Panc1 (cell line): ENCODE measurements at regions of chr5 and their contacts with region 1.

Region 1: DNA sequence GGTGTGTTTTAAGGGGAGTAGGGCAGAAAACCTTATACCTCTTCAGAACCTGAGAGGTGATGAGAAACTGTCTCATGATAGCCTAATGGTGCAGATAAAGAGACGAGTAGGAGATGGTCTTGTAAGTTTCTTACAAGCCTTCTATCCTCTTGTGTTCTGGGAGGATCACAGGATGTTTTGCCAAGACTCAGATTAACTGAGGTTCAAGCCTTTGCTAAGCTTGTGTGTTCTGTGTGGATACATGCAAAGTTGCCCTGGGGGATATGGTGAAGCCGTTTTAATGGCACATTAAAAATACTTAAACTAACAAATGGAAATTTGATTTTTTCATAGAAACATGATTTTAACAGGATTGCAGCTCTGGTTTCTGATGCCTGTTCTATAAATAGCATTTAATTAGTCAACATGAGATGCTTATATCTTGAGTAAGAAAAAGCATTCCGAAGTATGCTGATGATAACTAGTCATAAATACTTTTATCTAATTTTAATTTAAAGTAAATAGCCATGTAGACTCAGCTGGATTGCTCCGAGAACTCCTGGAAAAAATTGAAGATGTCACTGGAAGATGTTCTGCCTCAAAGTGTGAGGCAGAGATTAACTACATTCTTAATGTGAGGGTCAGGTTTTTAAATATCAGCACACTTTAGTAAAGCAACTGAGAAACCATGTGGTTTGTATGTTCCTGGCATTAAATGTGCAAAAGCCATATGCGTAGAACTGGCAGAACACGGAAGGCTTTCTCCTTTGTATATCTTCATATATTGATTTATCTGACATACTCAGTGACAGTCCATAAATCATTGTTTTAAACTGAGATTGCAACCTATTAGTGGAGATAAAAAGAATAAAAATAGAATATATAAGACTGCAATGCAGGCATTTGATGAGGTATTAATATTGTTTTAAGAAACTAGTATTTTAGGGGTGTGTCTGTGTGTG is 53.7 kb downstream of the IPO11 start:
- DNase-seq: no peak
- ATAC-seq: no peak
- H3K4me3 ChIP-seq: no peak overlapping the region
- H3K27ac ChIP-seq: no peak overlapping the region
- H3K4me1 ChIP-seq: no peaks in the 10 kb centered on the region; the same call in 1 of the 2 replicates
- H3K27me3 ChIP-seq: no peaks in the 10 kb centered on the region
- CTCF ChIP-seq: no peak

Region 2: GRCh38 chr5:61901997-61902396 is 564.3 kb before region 1 on chr5:
- CTCF ChIA-PET with region 1: no interaction called
- POLR2A ChIA-PET with region 1: no interaction called
- in situ Hi-C with region 1: no loop called
- intact Hi-C with region 1: no loop called
- DNase-seq: no peak
- ATAC-seq: no peak
- H3K4me3 ChIP-seq: no peak overlapping the region
- H3K27ac ChIP-seq: no peak overlapping the region
- H3K4me1 ChIP-seq: no peaks in the 10 kb centered on the region
- H3K27me3 ChIP-seq: no peaks in the 10 kb centered on the region
- CTCF ChIP-seq: no peak

Region 3: GRCh38 chr5:62448528-62448927 is 17.7 kb before region 1 on chr5:
- CTCF ChIA-PET with region 1: interaction called, 11 read pairs
- POLR2A ChIA-PET with region 1: no interaction called
- in situ Hi-C with region 1: no loop called
- intact Hi-C with region 1: no loop called
- DNase-seq: no peak
- ATAC-seq: no peak
- H3K4me3 ChIP-seq: no peak overlapping the region
- H3K27ac ChIP-seq: no peak overlapping the region
- H3K4me1 ChIP-seq: no peaks in the 10 kb centered on the region
- H3K27me3 ChIP-seq: no peaks in the 10 kb centered on the region
- CTCF ChIP-seq: no peak

Region 4: DNA sequence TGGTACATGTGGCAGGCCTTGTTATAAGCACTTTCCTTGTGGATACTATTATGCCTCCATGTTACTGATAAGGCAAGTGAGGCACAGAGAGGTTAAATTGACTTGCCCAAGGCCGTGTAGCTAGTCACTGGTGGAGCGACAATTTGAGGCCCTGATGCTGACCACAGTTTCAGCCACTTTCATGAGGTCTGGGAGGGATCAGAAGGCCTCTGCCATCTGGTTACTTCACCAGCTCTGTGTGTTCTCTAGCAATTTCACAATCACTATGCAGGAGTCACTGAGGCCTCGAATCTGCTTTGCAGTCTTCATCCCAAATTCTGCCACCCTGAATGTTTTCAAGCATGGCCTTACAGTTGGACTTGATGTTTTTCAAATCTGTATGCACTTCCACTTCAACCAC is 121.5 kb after region 1 on chr5:
- CTCF ChIA-PET with region 1: no interaction called
- POLR2A ChIA-PET with region 1: no interaction called
- in situ Hi-C with region 1: no loop called
- intact Hi-C with region 1: no loop called
- DNase-seq: no peak
- ATAC-seq: no peak
- H3K4me3 ChIP-seq: no peak overlapping the region
- H3K27ac ChIP-seq: no peak overlapping the region
- H3K4me1 ChIP-seq: no peaks in the 10 kb centered on the region
- H3K27me3 ChIP-seq: no peaks in the 10 kb centered on the region
- CTCF ChIP-seq: no peak